ENCODE measurements at regions of chr16 and their contacts with region 1.

Region 1: DNA sequence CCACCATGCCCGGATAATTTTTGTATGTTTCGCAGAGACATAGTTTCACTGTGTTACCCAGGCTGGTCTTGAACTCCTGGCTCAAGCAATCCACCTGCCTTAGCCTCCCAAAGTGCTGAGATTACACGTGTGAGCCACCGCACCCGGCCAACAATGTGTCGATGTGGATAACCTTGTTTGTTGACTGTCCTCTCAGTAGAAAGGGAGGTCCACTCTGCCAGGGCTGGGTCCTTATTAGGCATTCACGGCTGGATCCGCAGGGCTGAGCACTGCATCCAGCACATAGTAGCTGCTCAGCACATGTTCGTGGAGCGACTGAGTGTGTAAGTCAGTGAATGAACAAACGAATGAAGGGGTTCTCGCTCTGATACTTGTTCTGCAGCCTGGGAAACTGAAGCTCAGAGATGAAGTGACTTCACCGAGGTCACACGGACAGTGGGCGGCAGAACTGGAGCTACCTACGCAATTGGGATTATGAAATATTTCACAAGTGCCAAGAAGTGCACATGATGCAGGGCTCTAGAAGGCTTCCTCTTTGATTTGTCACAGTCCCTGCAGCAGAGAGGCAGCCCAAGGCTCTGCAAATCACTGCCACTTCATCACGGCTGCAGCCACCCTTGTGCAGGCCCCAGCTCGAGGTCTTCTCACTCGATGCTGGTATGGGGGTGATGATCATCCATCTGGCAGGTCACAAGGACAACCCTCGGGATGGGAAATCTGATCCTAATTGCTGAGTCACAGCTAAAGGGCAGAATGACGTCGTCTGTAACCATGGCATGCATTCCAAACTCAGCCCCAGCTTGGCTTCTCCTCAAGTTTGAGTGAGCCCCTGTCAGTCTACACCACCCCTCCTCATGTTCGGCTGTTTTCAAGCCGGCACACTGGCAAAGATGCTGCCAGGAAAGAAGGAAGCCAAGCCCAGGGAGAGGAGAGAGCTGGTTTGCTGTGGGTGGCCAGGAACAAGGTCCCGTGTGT is 28.0 kb upstream of the SNN start:
- DNase-seq: peak; percentile 56
- ATAC-seq: no peak; the same call in 1 of the 2 replicates
- H3K4me3 ChIP-seq: no peak overlapping the region
- H3K27ac ChIP-seq: peak overlapping the region; percentile 63
- H3K4me1 ChIP-seq: peaks cover 17% of the 10 kb centered on the region
- H3K27me3 ChIP-seq: no peaks in the 10 kb centered on the region
- CTCF ChIP-seq: no peak

Region 2: DNA sequence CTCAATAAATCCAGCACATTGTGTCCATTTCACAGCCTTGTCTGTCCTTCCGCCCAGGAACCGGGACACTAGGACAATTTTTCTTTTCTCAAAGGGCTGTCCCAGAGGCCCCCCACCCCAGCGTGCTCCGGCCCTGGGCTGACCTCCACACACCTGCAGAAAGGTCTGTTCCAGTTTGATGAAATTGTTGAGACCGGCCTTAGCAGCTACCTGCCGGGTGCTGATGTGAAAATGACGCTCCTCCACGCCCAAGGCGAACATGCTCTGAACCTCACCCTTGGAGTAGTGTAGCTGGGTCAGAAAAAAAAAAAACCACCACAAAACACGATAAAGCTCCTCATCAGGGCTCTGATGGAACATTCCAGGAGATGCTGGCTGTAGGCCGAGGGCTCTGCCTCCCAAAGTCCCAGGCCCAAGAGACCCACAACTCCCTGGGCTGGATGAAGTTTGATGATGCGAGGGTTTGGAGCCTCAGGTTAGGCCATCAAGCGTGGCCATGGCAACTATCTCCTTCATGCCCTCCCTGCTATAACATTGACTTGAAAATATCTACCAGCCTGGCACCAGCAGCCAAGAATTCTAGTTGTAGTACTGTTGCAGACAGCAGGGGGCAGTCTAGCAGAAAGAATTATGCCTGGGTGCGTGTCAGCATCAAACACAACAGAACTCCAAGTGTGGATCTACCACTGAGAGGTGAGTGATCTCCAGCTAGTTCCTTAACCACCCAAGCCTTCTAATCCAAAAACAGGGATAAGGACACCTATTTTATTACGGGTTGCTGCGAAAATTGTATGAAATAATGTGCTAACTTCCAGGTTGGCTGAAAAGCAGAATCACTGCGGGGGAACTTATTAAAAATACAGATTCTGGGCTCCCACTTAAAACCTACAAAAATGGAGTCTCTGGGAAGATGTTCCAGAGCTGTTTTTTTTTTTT is 232.9 kb before region 1 on chr16:
- CTCF ChIA-PET with region 1: no interaction called
- POLR2A ChIA-PET with region 1: no interaction called
- intact Hi-C with region 1: loop called (anchors 1 kb)
- DNase-seq: peak; percentile 72
- ATAC-seq: peak; percentile 57
- H3K4me3 ChIP-seq: no peak overlapping the region
- H3K27ac ChIP-seq: no peak overlapping the region
- H3K4me1 ChIP-seq: no peaks in the 10 kb centered on the region
- H3K27me3 ChIP-seq: no peaks in the 10 kb centered on the region
- CTCF ChIP-seq: peak; percentile 74

Region 3: GRCh38 chr16:12010388-12011251 is 370.4 kb after region 1 on chr16:
- CTCF ChIA-PET with region 1: no interaction called
- POLR2A ChIA-PET with region 1: no interaction called
- intact Hi-C with region 1: no loop called
- DNase-seq: no peak
- ATAC-seq: no peak
- H3K4me3 ChIP-seq: no peak overlapping the region
- H3K27ac ChIP-seq: no peak overlapping the region
- H3K4me1 ChIP-seq: no peaks in the 10 kb centered on the region
- H3K27me3 ChIP-seq: no peaks in the 10 kb centered on the region
- CTCF ChIP-seq: no peak